ENCODE measurements at regions of chr6 and their contacts with region 1.

Region 1: GRCh38 chr6:149648148-149649145 is at the start of gene KATNA1:
- DNase-seq: peak; percentile 93
- H3K4me3 ChIP-seq: peak within 1 kb of the TSS; percentile 62 to 73 (median 72)
- H3K27ac ChIP-seq: peak within 1 kb of the TSS; percentile 79
- H3K4me1 ChIP-seq: peaks cover 5% of the 10 kb centered on the region
- H3K27me3 ChIP-seq: no peaks in the 10 kb centered on the region
- CTCF ChIP-seq: no peak
- total RNA-seq, gene KATNA1: 19.3 to 21.3 TPM

Region 2: DNA sequence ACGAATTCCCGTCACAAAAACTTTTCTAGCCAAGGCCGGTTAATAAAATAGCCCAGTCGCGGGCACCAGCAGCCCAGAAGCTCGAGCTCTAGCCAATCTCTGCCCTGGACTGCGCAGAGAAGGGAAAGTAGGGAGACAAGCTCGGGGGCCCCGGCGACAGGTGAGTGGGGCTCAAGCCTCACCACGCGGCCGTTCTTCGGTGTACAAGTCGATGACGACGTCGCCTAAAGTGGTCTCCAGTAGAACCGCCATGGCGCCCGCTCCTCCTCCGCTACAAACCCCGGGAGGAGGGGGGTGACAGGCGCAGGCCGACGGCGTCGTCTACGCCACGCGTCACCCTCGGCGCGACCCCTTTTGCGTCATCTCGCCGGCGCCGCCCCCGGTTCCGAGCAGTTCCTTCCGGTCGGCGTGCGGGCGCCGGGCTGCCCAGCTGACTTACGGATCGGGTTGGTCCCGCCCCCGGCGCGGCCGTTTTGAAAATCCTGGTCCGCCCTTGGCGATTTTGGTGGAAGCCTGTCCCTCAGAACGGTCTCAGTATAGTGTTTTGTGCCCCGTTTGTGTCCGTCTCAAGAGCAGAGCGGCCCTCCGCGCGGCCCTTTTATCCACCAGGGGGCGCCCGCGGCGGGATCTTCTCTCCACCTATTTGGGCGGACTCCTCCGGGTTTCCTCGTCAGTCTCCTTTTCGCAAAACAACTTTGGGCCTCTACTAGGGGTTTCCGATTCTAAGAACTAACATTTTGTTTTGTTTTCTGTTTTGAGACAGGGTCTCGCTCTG is 102.5 kb before region 1 on chr6 and contains the start of gene PPIL4:
- CTCF ChIA-PET with region 1: no interaction called
- dilution Hi-C with region 1: no loop called
- in situ Hi-C with region 1: no loop called
- intact Hi-C with region 1: loop called (anchors 1 kb)
- DNase-seq: peak; percentile 94
- H3K4me3 ChIP-seq: peak within 1 kb of the TSS; percentile 89 to 90 (median 90)
- H3K27ac ChIP-seq: peak within 1 kb of the TSS; percentile 97
- H3K4me1 ChIP-seq: peaks cover 4% of the 10 kb centered on the region
- H3K27me3 ChIP-seq: no peaks in the 10 kb centered on the region
- CTCF ChIP-seq: peak; percentile 75 to 88
- total RNA-seq, gene PPIL4: 18.7 to 28.8 TPM

Region 3: GRCh38 chr6:149593443-149593842 is 55.0 kb before region 1 on chr6:
- CTCF ChIA-PET with region 1: no interaction called
- dilution Hi-C with region 1: loop called (anchors 5 kb)
- in situ Hi-C with region 1: no loop called
- intact Hi-C with region 1: no loop called
- DNase-seq: no peak
- H3K4me3 ChIP-seq: no peak overlapping the region
- H3K27ac ChIP-seq: no peak overlapping the region
- H3K4me1 ChIP-seq: no peaks in the 10 kb centered on the region
- H3K27me3 ChIP-seq: no peaks in the 10 kb centered on the region
- CTCF ChIP-seq: no peak

Region 4: DNA sequence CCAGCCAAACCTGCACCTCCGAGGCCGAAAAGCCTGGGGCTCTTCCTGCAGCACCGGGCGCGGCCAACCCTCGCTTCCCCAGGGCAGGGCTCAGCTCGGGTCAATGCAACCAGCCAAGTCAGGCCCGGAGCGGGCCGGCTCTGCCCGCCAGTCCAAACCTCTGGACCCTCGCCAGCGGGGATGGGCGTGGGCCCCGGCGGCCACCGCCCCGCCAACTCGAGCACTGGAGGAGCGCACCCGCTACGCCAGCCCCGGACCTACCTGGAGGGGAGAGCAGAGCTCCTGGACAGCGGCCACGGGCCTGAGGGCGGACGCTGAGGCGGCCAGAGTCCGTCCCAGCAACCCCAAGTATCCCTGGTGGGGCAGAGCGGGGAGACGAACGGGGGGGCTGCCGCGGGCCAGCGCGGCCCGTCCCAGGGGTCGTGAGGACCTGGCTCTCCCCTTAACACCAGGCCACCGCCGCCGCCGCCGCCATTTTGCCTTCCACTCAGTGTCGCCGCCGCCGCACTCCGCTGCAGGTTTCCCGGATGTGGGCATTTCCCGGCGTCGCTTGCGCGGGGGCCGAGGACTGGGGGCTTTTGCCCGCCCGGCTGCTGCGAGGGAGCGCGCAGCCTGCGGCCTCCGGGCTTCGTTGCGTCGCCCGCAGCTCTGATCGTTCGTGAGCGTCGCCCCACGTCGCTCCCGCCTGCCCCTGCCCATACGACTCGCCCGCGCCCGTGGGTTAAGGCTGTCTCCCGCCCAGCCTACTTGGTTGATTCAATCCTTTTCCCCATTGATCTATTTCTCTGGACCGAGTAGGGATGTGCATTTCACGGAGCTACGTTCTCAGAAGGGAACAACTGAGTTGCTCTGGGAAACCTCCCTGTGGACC is 69.4 kb after region 1 on chr6 and contains the start of gene LATS1:
- CTCF ChIA-PET with region 1: no interaction called
- dilution Hi-C with region 1: no loop called
- in situ Hi-C with region 1: no loop called
- intact Hi-C with region 1: loop called (anchors 5 kb)
- DNase-seq: peak; percentile 91
- H3K4me3 ChIP-seq: peak within 1 kb of the TSS; percentile 66 to 92 (median 91)
- H3K27ac ChIP-seq: peak within 1 kb of the TSS; percentile 86
- H3K4me1 ChIP-seq: no peaks in the 10 kb centered on the region
- H3K27me3 ChIP-seq: no peaks in the 10 kb centered on the region
- CTCF ChIP-seq: no peak
- total RNA-seq, gene LATS1: 19.8 to 26.6 TPM

Measured in mammary epithelial cell (primary cell).